Activated CD4-positive, alpha-beta T cell treated with anti-CD3 and anti-CD28 coated beads for 36 hours (primary cell): ENCODE measurements at regions of chr1 and their contacts with region 1.

Region 1: GRCh38 chr1:110829955-110830553 is 42.9 kb upstream of the CD53 start:
- DNase-seq: no peak
- ATAC-seq: peak; percentile 86
- H3K4me3 Mint-ChIP-seq: no peak overlapping the region
- H3K27ac Mint-ChIP-seq: no peak overlapping the region
- H3K4me1 Mint-ChIP-seq: peaks cover 5% of the 10 kb centered on the region
- H3K27me3 Mint-ChIP-seq: no peaks in the 10 kb centered on the region

Region 2: DNA sequence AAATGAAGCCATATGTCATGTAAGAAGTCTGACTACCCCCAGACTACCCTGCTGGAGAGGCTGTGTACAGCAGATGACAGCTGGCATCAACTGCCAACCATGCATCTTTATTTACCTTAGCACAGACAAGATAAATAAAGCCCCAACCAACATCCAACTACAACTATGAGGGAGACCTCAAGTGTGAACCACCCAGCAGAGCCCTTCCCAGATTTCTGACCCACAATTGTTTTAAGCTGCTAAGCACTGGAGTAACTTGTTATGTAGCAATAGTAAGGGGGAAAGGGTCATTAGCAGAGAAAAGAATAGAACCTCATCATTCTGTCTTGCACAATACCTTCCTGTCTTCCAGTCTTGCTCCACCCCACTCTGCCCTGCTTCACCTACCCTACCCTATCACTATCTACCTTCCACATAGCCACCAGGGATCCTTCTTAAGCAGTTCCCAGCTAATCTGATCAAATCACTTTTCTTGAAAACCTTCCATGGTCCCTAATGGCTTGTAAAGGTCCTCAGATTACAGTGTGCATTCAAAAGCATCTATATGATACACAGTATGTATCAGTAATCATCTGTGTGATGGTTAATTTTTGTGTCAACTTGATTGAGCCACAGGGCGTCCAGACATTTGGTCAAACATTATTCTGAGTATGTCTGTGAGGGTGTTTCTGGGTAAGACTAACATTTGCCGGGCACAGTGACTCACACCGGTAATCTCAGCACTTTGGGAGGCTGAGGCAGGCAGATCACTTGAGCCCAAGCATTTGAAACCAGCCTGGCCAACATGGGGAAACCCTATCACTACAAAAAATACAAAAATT is 510.5 kb before region 1 on chr1:
- CTCF ChIA-PET with region 1: no interaction called
- POLR2A ChIA-PET with region 1: no interaction called
- intact Hi-C with region 1: no loop called
- DNase-seq: no peak
- ATAC-seq: peak; percentile 55
- H3K4me3 Mint-ChIP-seq: no peak overlapping the region
- H3K27ac Mint-ChIP-seq: no peak overlapping the region
- H3K4me1 Mint-ChIP-seq: peaks cover 3% of the 10 kb centered on the region
- H3K27me3 Mint-ChIP-seq: no peaks in the 10 kb centered on the region

Region 3: GRCh38 chr1:110816930-110817329 is 13.1 kb before region 1 on chr1:
- CTCF ChIA-PET with region 1: interaction called, 16 read pairs
- POLR2A ChIA-PET with region 1: no interaction called
- intact Hi-C with region 1: no loop called
- DNase-seq: no peak
- ATAC-seq: no peak
- H3K4me3 Mint-ChIP-seq: no peak overlapping the region
- H3K27ac Mint-ChIP-seq: no peak overlapping the region
- H3K4me1 Mint-ChIP-seq: no peaks in the 10 kb centered on the region
- H3K27me3 Mint-ChIP-seq: no peaks in the 10 kb centered on the region

Region 4: GRCh38 chr1:110846861-110847260 is 16.8 kb after region 1 on chr1:
- CTCF ChIA-PET with region 1: interaction called, 9 read pairs
- POLR2A ChIA-PET with region 1: interaction called, 3 read pairs
- intact Hi-C with region 1: loop called (anchors 1 kb)
- DNase-seq: no peak
- ATAC-seq: no peak
- H3K4me3 Mint-ChIP-seq: no peak overlapping the region
- H3K27ac Mint-ChIP-seq: no peak overlapping the region
- H3K4me1 Mint-ChIP-seq: no peaks in the 10 kb centered on the region
- H3K27me3 Mint-ChIP-seq: no peaks in the 10 kb centered on the region

Region 5: GRCh38 chr1:110856410-110856809 is 26.4 kb after region 1 on chr1:
- CTCF ChIA-PET with region 1: interaction called, 11 read pairs
- POLR2A ChIA-PET with region 1: no interaction called
- intact Hi-C with region 1: no loop called
- DNase-seq: no peak
- ATAC-seq: no peak
- H3K4me3 Mint-ChIP-seq: no peak overlapping the region
- H3K27ac Mint-ChIP-seq: no peak overlapping the region
- H3K4me1 Mint-ChIP-seq: peaks cover 25% of the 10 kb centered on the region
- H3K27me3 Mint-ChIP-seq: no peaks in the 10 kb centered on the region